ENCODE measurements at regions of chr9 and their contacts with region 1.

Region 1: GRCh38 chr9:95508968-95509850 is 7.6 kb downstream of the PTCH1 start:
- DNase-seq: peak; percentile 80 to 97 (median 90)
- ATAC-seq: peak; percentile 42
- H3K4me3 ChIP-seq: peak overlapping the region; percentile 55 to 63
- H3K27ac ChIP-seq: peak overlapping the region; percentile 82 to 86
- H3K4me1 ChIP-seq: peaks cover 0 to 62% of the 10 kb centered on the region in 2 donors
- H3K27me3 ChIP-seq: peaks cover 3 to 100% of the 10 kb centered on the region in 2 donors
- CTCF ChIP-seq: no peak

Region 2: GRCh38 chr9:95317119-95317892 is 191.9 kb before region 1 on chr9 and contains the start of gene FANCC:
- intact Hi-C with region 1: loop called in 1 of 2 experiments (anchors 10 kb)
- DNase-seq: peak; percentile 93 to 96 (median 94)
- ATAC-seq: peak; percentile 93
- H3K4me3 ChIP-seq: peak within 1 kb of the TSS; percentile 78 to 98
- H3K27ac ChIP-seq: peak within 1 kb of the TSS; percentile 91 to 93
- H3K4me1 ChIP-seq: peaks cover 0 to 13% of the 10 kb centered on the region in 2 donors
- H3K27me3 ChIP-seq: no peaks in the 10 kb centered on the region
- CTCF ChIP-seq: no peak
- polyA plus RNA-seq, gene FANCC: 22.7 to 27.4 (median 26.3) TPM